ENCODE measurements at regions of chr2 and their contacts with region 1.

Region 1: DNA sequence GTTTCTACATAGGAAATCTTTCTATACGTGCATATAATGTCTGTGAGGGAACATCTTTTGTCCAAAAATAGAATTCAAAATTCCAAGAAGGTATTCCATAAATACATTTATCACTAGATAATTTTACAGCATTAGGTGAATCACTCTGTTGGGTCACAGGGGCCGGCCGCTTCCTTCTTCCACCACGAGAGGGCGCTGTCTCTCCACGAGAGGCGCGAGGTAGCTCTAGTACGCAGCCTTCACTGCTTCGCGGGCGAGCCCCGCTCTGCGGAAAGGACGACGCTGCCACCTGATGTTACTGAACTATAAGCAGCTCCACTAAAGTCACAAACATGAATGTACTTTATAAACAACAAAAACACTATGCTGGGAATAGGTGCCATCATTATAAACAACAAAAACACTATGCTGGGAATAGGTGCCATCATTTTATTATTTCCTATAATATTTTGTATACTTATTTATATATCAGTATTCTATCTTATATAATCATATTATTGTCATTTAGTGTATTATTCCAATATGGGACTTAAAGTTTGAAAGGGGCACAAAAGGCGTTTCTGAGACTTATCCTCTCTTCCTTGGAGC is 69.4 kb upstream of the REV1 start:
- DNase-seq: peak; percentile 52 to 78 (median 68)
- ATAC-seq: peak; percentile 96
- H3K4me3 ChIP-seq: no peak overlapping the region
- H3K4me3 Mint-ChIP-seq: peak overlapping the region in 3 of 10 donors; percentile 9 to 65 (median 36)
- H3K27ac ChIP-seq: no peak overlapping the region
- H3K27ac Mint-ChIP-seq: peak overlapping the region in 1 of 9 donors; percentile 62
- H3K4me1 ChIP-seq: no peaks in the 10 kb centered on the region
- H3K4me1 Mint-ChIP-seq: peaks cover 0 to 5% (median 0%) of the 10 kb centered on the region in 7 donors
- H3K27me3 ChIP-seq: no peaks in the 10 kb centered on the region
- H3K27me3 Mint-ChIP-seq: peaks cover 0 to 9% (median 0%) of the 10 kb centered on the region in 5 donors

Region 2: GRCh38 chr2:99442837-99443236 is 116.3 kb before region 1 on chr2:
- CTCF ChIA-PET with region 1: no interaction called
- POLR2A ChIA-PET with region 1: no interaction called
- intact Hi-C with region 1: no loop called
- DNase-seq: peak in 1 of 9 donors; percentile 1
- ATAC-seq: no peak
- H3K4me3 ChIP-seq: no peak overlapping the region
- H3K4me3 Mint-ChIP-seq: no peak overlapping the region
- H3K27ac ChIP-seq: no peak overlapping the region
- H3K27ac Mint-ChIP-seq: no peak overlapping the region
- H3K4me1 ChIP-seq: no peaks in the 10 kb centered on the region
- H3K4me1 Mint-ChIP-seq: peaks cover 7 to 23% (median 14%) of the 10 kb centered on the region in 7 donors
- H3K27me3 ChIP-seq: no peaks in the 10 kb centered on the region
- H3K27me3 Mint-ChIP-seq: no peaks in the 10 kb centered on the region

Region 3: GRCh38 chr2:99572373-99573164 is 13.4 kb after region 1 on chr2:
- CTCF ChIA-PET with region 1: interaction called, 12 read pairs
- POLR2A ChIA-PET with region 1: no interaction called
- intact Hi-C with region 1: no loop called
- DNase-seq: no peak
- ATAC-seq: no peak
- H3K4me3 ChIP-seq: no peak overlapping the region
- H3K4me3 Mint-ChIP-seq: no peak overlapping the region
- H3K27ac ChIP-seq: no peak overlapping the region
- H3K27ac Mint-ChIP-seq: no peak overlapping the region
- H3K4me1 ChIP-seq: no peaks in the 10 kb centered on the region
- H3K4me1 Mint-ChIP-seq: peaks cover 0 to under 1% (median 0%) of the 10 kb centered on the region in 7 donors
- H3K27me3 ChIP-seq: no peaks in the 10 kb centered on the region
- H3K27me3 Mint-ChIP-seq: peaks cover 0 to 6% (median 0%) of the 10 kb centered on the region in 5 donors

Region 4: GRCh38 chr2:99670768-99671734 is 111.9 kb after region 1 on chr2:
- CTCF ChIA-PET with region 1: no interaction called
- POLR2A ChIA-PET with region 1: no interaction called
- intact Hi-C with region 1: no loop called
- DNase-seq: no peak
- ATAC-seq: no peak
- H3K4me3 ChIP-seq: no peak overlapping the region
- H3K4me3 Mint-ChIP-seq: no peak overlapping the region
- H3K27ac ChIP-seq: no peak overlapping the region
- H3K27ac Mint-ChIP-seq: no peak overlapping the region
- H3K4me1 ChIP-seq: no peaks in the 10 kb centered on the region
- H3K4me1 Mint-ChIP-seq: no peaks in the 10 kb centered on the region
- H3K27me3 ChIP-seq: no peaks in the 10 kb centered on the region
- H3K27me3 Mint-ChIP-seq: no peaks in the 10 kb centered on the region

Region 5: GRCh38 chr2:99998651-99999320 is 439.6 kb after region 1 on chr2:
- CTCF ChIA-PET with region 1: no interaction called
- POLR2A ChIA-PET with region 1: no interaction called
- intact Hi-C with region 1: loop called in 1 of 2 experiments (anchors 5 kb)
- DNase-seq: no peak
- ATAC-seq: no peak
- H3K4me3 ChIP-seq: no peak overlapping the region
- H3K4me3 Mint-ChIP-seq: no peak overlapping the region
- H3K27ac ChIP-seq: no peak overlapping the region
- H3K27ac Mint-ChIP-seq: no peak overlapping the region
- H3K4me1 ChIP-seq: no peaks in the 10 kb centered on the region
- H3K4me1 Mint-ChIP-seq: peaks cover 0 to 12% (median 0%) of the 10 kb centered on the region in 7 donors
- H3K27me3 ChIP-seq: no peaks in the 10 kb centered on the region
- H3K27me3 Mint-ChIP-seq: no peaks in the 10 kb centered on the region

Region 6: DNA sequence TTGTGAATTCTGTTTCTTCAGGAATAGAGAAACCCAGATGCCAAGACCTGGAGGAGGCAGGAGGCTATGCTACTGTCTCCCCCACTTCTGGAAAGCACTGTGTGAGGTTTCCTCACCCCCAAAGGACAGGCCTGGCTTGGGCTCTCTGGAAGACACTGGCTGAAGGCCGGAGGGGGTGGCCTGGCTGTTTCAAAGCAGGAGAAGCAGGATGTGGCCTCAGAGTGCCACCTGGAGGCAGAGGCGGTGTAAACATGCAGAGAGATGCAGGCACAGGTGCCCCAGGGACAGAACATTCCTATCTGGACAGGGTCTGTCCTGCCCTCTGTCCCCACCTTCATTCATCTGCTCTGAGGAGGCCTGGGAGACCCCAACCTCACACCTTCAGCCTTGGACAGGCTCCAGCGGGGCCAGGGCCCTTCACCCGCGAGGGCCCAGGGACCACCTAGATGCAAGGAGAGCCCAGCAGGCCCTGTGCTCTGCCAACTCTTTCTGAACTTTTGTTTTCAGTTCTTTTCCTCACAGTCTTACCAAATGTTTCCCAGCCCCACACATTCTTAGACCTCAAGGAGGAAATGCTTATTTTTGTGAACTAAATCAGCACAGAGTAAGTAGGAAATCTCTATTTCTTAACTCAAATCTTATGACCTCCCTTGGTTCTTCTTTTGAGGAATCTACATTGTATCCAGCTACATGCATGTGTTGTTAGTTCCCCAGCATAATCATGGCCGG is 683.9 kb after region 1 on chr2:
- CTCF ChIA-PET with region 1: interaction called, 8 read pairs
- POLR2A ChIA-PET with region 1: no interaction called
- intact Hi-C with region 1: loop called (anchors 1 kb)
- DNase-seq: peak in 6 of 9 donors; percentile 17 to 48 (median 43)
- ATAC-seq: peak; percentile 56
- H3K4me3 ChIP-seq: no peak overlapping the region
- H3K4me3 Mint-ChIP-seq: no peak overlapping the region
- H3K27ac ChIP-seq: no peak overlapping the region
- H3K27ac Mint-ChIP-seq: no peak overlapping the region
- H3K4me1 ChIP-seq: no peaks in the 10 kb centered on the region
- H3K4me1 Mint-ChIP-seq: no peaks in the 10 kb centered on the region
- H3K27me3 ChIP-seq: no peaks in the 10 kb centered on the region
- H3K27me3 Mint-ChIP-seq: peaks cover 0 to 9% (median 4%) of the 10 kb centered on the region in 5 donors

Region 7: GRCh38 chr2:100262555-100263320 is 703.6 kb after region 1 on chr2:
- CTCF ChIA-PET with region 1: interaction called, 4 read pairs
- POLR2A ChIA-PET with region 1: no interaction called
- intact Hi-C with region 1: loop called (anchors 1 to 5 kb)
- DNase-seq: peak; percentile 14 to 65 (median 42)
- ATAC-seq: peak; percentile 75
- H3K4me3 ChIP-seq: no peak overlapping the region
- H3K4me3 Mint-ChIP-seq: no peak overlapping the region
- H3K27ac ChIP-seq: no peak overlapping the region
- H3K27ac Mint-ChIP-seq: no peak overlapping the region
- H3K4me1 ChIP-seq: no peaks in the 10 kb centered on the region
- H3K4me1 Mint-ChIP-seq: peaks cover 0 to 4% (median 0%) of the 10 kb centered on the region in 7 donors
- H3K27me3 ChIP-seq: no peaks in the 10 kb centered on the region
- H3K27me3 Mint-ChIP-seq: no peaks in the 10 kb centered on the region

Region 8: DNA sequence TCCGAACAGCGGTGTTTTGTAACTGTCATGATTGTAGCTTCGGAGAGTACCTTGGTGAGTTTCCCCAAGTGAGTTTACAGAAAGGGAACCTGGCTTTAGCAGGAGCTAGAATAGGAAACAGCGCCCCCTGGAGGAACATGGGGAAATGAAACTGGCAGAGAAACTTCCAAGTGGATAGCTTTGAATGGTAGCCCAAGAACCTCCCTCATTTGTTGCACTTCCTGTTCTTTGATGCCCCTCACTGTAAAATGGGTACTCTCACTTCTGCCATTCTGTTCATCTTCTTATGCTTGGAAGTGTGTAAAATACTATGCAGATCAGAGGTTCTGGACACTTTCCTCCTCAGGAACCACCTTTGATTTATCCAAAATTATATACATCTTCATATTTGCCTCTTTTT is 822.1 kb after region 1 on chr2:
- CTCF ChIA-PET with region 1: interaction called, 5 read pairs
- POLR2A ChIA-PET with region 1: no interaction called
- intact Hi-C with region 1: loop called in 1 of 2 experiments (anchors 2 kb)
- DNase-seq: peak; percentile 20 to 75 (median 49)
- ATAC-seq: peak; percentile 80
- H3K4me3 ChIP-seq: no peak overlapping the region
- H3K4me3 Mint-ChIP-seq: no peak overlapping the region
- H3K27ac ChIP-seq: no peak overlapping the region
- H3K27ac Mint-ChIP-seq: no peak overlapping the region
- H3K4me1 ChIP-seq: no peaks in the 10 kb centered on the region
- H3K4me1 Mint-ChIP-seq: peaks cover 0 to 6% (median 0%) of the 10 kb centered on the region in 7 donors
- H3K27me3 ChIP-seq: no peaks in the 10 kb centered on the region
- H3K27me3 Mint-ChIP-seq: peaks cover 0 to 12% (median 0%) of the 10 kb centered on the region in 5 donors

Measured in naive thymus-derived CD4-positive, alpha-beta T cell (primary cell).